Activated T-helper 2 cell treated with anti-CD3 and anti-CD28 coated beads, Interferon-gamma antibody, Interleukin-2, Interleukin-4, amounts not matched to agents 10 μg/mL and 5 μg/mL and 100 μg/mL, durations not matched to agents 14 hours and 24 hours and 36 hours (primary cell): ENCODE measurements at regions of chr3 and their contacts with region 1.

Region 1: DNA sequence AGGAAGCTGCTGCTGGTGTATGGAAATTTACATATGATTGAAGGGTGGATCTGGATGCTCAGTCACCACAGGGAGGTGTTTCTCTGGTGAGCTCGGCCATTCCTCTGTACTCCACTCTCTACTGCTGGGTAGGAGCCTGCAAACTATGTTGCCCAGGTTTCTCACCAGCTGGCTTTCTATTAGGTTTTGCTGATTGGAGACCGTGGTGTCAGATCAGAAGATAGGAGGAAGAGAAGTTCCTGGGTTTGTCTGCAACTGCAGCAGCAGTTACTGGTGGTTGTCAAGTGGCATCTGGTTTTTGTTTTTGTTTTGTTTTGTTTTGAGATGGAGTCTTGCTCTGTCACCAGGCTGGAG is 61.7 kb downstream of the TAMM41 start:
- DNase-seq: peak; percentile 39
- H3K4me3 Mint-ChIP-seq: peak overlapping the region; percentile 67
- H3K27ac Mint-ChIP-seq: peak overlapping the region; percentile 91
- H3K4me1 Mint-ChIP-seq: peaks cover 14% of the 10 kb centered on the region
- H3K27me3 Mint-ChIP-seq: no peaks in the 10 kb centered on the region

Region 2: GRCh38 chr3:11770477-11771391 is 14.3 kb before region 1 on chr3:
- intact Hi-C with region 1: loop called (anchors 2 kb)
- DNase-seq: peak; percentile 86
- H3K4me3 Mint-ChIP-seq: no peak overlapping the region
- H3K27ac Mint-ChIP-seq: peak overlapping the region; percentile 46
- H3K4me1 Mint-ChIP-seq: peaks cover 26% of the 10 kb centered on the region
- H3K27me3 Mint-ChIP-seq: no peaks in the 10 kb centered on the region

Region 3: DNA sequence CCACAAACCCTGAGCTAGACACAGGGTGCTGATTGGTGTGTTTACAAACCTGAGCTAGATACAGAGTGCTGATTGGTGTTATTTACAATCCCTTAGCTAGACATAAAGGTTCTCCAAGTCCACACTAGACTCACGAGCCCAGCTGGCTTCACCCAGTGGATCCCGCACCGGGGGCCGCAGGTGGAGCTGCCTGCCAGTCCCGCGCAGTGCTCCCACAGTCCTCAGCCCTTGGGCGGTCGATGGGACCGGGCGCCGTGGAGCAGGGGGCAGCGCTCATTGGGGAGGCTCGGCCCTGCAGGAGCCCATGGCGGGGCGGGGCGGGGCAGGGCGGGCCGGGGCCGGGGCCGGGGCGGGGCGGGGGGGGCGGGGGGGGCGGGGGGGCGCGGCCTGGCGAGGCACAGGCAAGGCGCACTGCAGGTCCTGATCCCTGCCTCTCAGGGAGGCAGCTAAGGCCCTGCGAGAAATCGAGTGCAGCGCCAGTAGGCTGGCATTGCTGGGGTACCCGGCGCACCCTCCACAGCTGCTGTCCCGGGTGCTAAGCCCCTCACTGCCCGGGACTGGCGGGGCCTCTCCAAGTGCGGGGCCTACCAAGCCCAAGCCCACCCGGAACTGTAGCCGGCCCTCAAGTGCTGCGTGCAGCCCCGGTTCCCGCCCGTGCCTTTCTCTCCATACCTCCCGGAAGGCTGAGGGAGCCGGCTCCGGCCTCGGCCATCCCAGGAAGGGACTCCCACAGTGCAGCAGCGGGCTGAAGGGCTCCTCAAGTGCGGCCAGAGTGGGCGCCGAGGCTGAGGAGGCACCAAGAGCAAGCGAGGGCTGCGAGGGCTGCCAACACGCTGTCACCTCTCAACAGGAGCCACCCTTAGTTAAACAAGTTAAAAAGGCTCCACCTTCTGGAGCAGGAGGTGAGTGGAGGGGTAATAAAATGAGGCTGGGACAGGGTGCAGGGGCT is 983.9 kb after region 1 on chr3:
- intact Hi-C with region 1: no loop called
- DNase-seq: no peak
- H3K4me3 Mint-ChIP-seq: no peak overlapping the region
- H3K27ac Mint-ChIP-seq: no peak overlapping the region
- H3K4me1 Mint-ChIP-seq: no peaks in the 10 kb centered on the region
- H3K27me3 Mint-ChIP-seq: no peaks in the 10 kb centered on the region